ENCODE measurements at regions of chr12 and their contacts with region 1.

Region 1: GRCh38 chr12:6278439-6279255 is 31.8 kb upstream of the PLEKHG6 start:
- DNase-seq: peak; percentile 82
- H3K4me3 Mint-ChIP-seq: peak overlapping the region; percentile 69
- H3K27ac Mint-ChIP-seq: no peak overlapping the region
- H3K4me1 Mint-ChIP-seq: peaks cover 6% of the 10 kb centered on the region
- H3K27me3 Mint-ChIP-seq: peaks cover 79% of the 10 kb centered on the region

Region 2: DNA sequence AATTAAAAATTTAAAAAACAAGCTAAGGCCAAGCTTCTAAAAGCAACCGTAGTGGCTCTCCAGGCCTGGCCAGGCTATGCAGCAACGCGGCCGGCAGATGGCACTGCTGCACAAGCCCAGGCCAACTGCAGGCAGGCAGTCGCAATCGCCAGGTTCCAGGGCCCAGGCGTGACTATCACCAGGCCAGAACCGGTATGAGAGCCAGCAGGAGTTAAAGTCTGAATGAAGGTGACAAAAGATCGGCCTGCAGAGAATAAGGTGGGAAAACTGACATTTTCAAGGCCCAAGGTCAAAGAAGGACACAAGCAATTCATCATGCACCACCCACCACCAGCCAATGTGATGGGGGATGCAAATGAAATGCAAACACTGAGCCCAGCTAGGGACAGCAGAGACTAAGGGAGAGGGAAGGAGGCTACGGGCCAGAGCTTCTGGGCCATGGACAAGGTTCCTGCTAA is 290.0 kb before region 1 on chr12:
- CTCF ChIA-PET with region 1: interaction called, 15 read pairs
- DNase-seq: peak; percentile 81
- H3K4me3 Mint-ChIP-seq: no peak overlapping the region
- H3K27ac Mint-ChIP-seq: no peak overlapping the region
- H3K4me1 Mint-ChIP-seq: no peaks in the 10 kb centered on the region
- H3K27me3 Mint-ChIP-seq: peaks cover 10% of the 10 kb centered on the region

Region 3: DNA sequence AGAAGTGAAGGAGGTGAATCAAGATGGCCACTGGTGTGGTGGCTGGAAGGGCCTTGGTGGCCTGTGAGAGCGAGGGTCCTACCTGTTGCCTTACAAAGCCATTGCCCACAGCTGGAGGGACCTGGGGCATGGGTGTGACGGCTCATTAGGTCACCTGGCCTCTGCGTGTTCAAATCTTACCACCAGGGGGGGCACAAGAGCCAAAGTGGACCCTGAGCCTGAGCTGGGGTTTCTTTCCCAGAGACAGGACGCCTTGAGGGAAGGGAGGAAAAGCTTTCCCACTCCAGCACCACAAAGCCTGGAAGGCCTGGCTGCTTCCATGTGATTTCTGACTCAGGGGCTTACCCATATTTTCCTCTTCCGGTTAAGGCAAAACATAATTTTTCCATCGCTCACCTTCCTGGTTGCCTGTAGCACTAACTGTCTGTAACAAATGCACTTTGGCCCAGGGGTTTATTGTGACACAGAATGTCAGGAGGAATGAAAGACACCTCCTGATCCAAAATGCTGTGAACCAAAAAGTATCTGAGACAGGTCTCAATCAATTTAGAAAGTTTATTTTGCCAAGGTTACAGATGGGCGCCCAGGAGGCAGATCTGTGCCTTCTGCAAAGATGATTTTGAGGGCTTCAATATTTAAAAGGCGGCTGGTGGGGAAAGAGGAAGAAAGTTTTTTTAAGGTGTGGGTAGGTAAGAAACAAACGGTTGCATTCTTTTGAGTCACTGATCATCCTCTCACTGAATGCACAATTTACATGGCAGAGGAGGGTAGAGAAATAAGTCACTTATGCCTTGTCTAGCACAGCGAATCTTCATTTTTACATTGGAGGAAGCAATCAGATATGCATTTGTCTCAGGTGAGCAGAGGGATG is 82.7 kb before region 1 on chr12:
- CTCF ChIA-PET with region 1: interaction called, 109 read pairs
- DNase-seq: peak; percentile 80
- H3K4me3 Mint-ChIP-seq: no peak overlapping the region
- H3K27ac Mint-ChIP-seq: no peak overlapping the region
- H3K4me1 Mint-ChIP-seq: peaks cover 6% of the 10 kb centered on the region
- H3K27me3 Mint-ChIP-seq: peaks cover 55% of the 10 kb centered on the region

Region 4: GRCh38 chr12:6201199-6201608 is 77.4 kb before region 1 on chr12:
- CTCF ChIA-PET with region 1: interaction called, 109 read pairs
- DNase-seq: no peak
- H3K4me3 Mint-ChIP-seq: no peak overlapping the region
- H3K27ac Mint-ChIP-seq: no peak overlapping the region
- H3K4me1 Mint-ChIP-seq: peaks cover 10% of the 10 kb centered on the region
- H3K27me3 Mint-ChIP-seq: peaks cover 86% of the 10 kb centered on the region

Measured in activated naive CD4-positive, alpha-beta T cell treated with anti-CD3 and anti-CD28 coated beads, Interleukin-2, amount 10 ng/mL, durations not matched to agents 7 days and 5 days (primary cell).